ENCODE measurements at regions of chr6 and their contacts with region 1.

Region 1: GRCh38 chr6:161370880-161371279 is 97.0 kb upstream of the AGPAT4 start:
- DNase-seq: peak; percentile 82
- ATAC-seq: peak; percentile 90
- H3K4me3 Mint-ChIP-seq: no peak overlapping the region
- H3K27ac Mint-ChIP-seq: no peak overlapping the region
- H3K4me1 Mint-ChIP-seq: no peaks in the 10 kb centered on the region
- H3K27me3 Mint-ChIP-seq: no peaks in the 10 kb centered on the region

Region 2: GRCh38 chr6:160520043-160520904 is 850.6 kb before region 1 on chr6:
- CTCF ChIA-PET with region 1: interaction called, 3 read pairs
- POLR2A ChIA-PET with region 1: no interaction called
- intact Hi-C with region 1: loop called (anchors 2 to 5 kb)
- DNase-seq: peak; percentile 83
- ATAC-seq: peak; percentile 76
- H3K4me3 Mint-ChIP-seq: peak overlapping the region; percentile 79
- H3K27ac Mint-ChIP-seq: peak overlapping the region; percentile 80
- H3K4me1 Mint-ChIP-seq: peaks cover 25% of the 10 kb centered on the region
- H3K27me3 Mint-ChIP-seq: peaks cover 5% of the 10 kb centered on the region

Region 3: GRCh38 chr6:160750276-160750689 is 620.6 kb before region 1 on chr6:
- CTCF ChIA-PET with region 1: interaction called, 13 read pairs
- POLR2A ChIA-PET with region 1: no interaction called
- intact Hi-C with region 1: loop called in 1 of 2 experiments (anchors 1 kb)
- DNase-seq: peak; percentile 48
- ATAC-seq: peak; percentile 51
- H3K4me3 Mint-ChIP-seq: no peak overlapping the region
- H3K27ac Mint-ChIP-seq: no peak overlapping the region
- H3K4me1 Mint-ChIP-seq: no peaks in the 10 kb centered on the region
- H3K27me3 Mint-ChIP-seq: peaks cover 15% of the 10 kb centered on the region

Region 4: DNA sequence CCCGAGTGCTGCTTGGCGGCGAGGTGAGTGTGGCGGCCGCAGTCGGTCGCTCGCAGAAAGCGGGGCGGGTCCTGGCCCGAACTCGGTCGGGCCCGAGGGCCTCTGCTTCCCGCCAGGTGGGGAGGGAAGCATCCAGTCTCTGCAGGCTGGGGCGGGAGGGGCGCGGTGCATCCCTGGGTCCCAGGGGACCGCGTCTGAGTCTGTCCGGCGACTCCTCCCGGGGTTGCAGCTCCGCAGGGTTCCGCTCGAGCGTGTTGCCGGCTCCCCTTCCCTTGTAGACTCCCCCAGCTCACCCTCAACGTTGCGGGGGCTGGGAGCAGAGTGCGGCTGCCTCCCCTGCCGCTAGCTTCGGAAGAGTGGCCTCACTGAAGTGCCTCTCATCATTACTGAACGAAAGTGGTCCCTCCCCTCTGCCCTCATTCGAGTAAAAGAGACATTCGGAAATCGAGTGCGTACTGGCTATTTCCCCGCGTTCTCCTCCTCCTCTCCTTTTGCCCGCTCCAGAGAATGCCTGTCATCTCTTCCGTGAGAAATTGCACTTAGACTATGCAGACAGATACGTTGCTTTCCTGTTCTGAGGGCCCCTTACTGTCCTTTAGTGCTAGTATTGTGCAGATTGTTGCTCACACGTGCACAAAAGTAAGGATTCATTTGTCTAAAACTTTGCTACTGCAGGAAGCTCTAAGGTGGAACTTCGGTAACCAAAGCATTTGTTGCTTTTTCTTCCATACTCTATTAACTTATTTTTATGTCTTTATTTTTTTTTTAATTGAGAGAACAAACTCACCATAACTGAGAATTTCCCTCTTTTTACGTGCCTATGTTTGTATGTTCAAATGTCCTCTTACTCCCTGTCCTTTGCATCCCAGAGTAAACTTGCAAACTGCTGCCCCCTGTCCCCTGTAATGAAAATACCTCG is 378.6 kb before region 1 on chr6:
- CTCF ChIA-PET with region 1: interaction called, 6 read pairs
- POLR2A ChIA-PET with region 1: no interaction called
- intact Hi-C with region 1: loop called (anchors 1 to 5 kb)
- DNase-seq: peak; percentile 45
- ATAC-seq: peak; percentile 61
- H3K4me3 Mint-ChIP-seq: peak overlapping the region; percentile 93
- H3K27ac Mint-ChIP-seq: peak overlapping the region; percentile 83
- H3K4me1 Mint-ChIP-seq: peaks cover 37% of the 10 kb centered on the region
- H3K27me3 Mint-ChIP-seq: no peaks in the 10 kb centered on the region

Region 5: GRCh38 chr6:161152907-161153662 is 217.8 kb before region 1 on chr6:
- CTCF ChIA-PET with region 1: interaction called, 8 read pairs
- POLR2A ChIA-PET with region 1: no interaction called
- intact Hi-C with region 1: loop called (anchors 1 to 5 kb)
- DNase-seq: peak; percentile 31
- ATAC-seq: no peak
- H3K4me3 Mint-ChIP-seq: no peak overlapping the region
- H3K27ac Mint-ChIP-seq: no peak overlapping the region
- H3K4me1 Mint-ChIP-seq: no peaks in the 10 kb centered on the region
- H3K27me3 Mint-ChIP-seq: no peaks in the 10 kb centered on the region

Region 6: GRCh38 chr6:161273752-161274487 is 97.0 kb before region 1 on chr6 and contains the start of gene AGPAT4:
- CTCF ChIA-PET with region 1: interaction called, 7 read pairs
- POLR2A ChIA-PET with region 1: no interaction called
- intact Hi-C with region 1: loop called in 1 of 2 experiments (anchors 5 kb)
- DNase-seq: peak; percentile 71
- ATAC-seq: peak; percentile 98
- H3K4me3 Mint-ChIP-seq: peak within 1 kb of the TSS; percentile 70
- H3K27ac Mint-ChIP-seq: peak within 1 kb of the TSS; percentile 86
- H3K4me1 Mint-ChIP-seq: peaks cover 23% of the 10 kb centered on the region
- H3K27me3 Mint-ChIP-seq: peaks cover 6% of the 10 kb centered on the region
- total RNA-seq, gene AGPAT4: 4.7 to 5.0 TPM